Gastrocnemius medialis (tissue), 4 donors: ENCODE measurements at regions of chr14 and their contacts with region 1.

Region 1: DNA sequence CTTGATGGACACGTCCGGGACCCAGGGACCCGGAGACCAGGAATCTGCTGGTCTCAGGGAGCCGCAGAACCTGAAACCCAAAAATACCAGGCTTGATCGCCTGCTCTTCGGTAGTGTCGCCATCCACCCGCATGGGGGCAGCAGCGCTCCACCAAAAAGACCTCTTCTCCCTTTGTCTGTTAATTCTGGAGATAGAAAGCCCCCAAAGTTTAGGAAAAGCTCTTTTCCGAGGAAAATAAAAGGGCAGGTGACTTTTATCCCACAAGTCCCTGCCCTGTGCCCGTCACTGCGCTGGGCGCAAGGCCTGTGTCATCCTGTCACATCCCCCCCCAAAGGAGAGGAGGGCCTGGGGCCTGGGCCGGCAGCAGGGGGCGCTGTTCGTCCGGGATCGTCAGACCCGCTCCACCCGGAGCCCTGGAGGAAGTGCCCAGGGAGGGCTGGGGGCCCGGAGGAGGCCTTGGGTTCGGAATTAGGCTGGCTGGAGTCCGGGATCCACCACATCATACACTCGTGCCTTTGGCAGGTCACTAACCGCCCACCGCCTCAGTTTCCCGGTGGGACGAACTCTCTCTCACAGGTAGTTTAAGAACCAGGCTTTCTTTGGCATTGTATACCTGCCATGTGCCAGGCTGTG is 31.9 kb downstream of the DAD1 start:
- DNase-seq: peak; percentile 32 to 65
- ATAC-seq: peak; percentile 75 to 86
- H3K4me3 ChIP-seq: peak overlapping the region; percentile 31 to 62 (median 47)
- H3K27ac ChIP-seq: peak overlapping the region in 3 of 4 donors; percentile 56 to 60 (median 58)
- H3K4me1 ChIP-seq: peaks cover 9 to 17% of the 10 kb centered on the region in 2 donors
- H3K27me3 ChIP-seq: no peaks in the 10 kb centered on the region
- CTCF ChIP-seq: peak; percentile 97 to 100 (median 98)
- POLR2A ChIP-seq: no peak

Region 2: DNA sequence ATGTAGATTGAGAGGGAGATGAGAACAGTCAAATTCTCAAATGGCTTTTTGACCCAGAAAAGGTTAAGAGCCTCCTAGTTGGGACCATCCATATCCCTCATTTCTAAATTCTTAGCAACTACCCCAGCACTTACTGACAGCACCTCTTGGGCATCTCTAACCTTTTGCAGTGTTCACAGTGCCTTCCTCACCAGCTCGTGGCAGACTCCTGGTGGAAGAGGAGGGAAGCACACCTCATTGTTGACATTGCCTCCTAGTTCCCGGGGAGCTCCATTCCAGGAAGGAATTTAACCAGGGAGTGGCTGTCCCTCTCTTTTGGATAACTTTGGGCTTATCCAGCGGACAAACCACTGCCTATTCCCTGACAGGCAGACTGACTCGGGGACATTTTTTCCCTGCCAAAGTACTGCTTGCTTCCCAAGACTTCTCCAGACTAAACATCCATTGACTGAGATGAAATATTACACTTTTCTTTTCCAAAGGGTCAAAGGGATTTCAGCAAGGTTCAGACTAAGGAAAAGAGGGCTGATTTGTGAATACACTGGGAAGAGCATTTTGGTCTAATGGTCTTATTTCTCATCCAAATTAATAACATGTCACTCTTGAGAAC is 96.0 kb after region 1 on chr14:
- in situ Hi-C with region 1: loop called in 1 of 4 experiments (anchors 10 kb)
- intact Hi-C with region 1: loop called (anchors 2 kb)
- DNase-seq: peak in 1 of 2 donors; percentile 33
- ATAC-seq: peak; percentile 58 to 70
- H3K4me3 ChIP-seq: no peak overlapping the region
- H3K27ac ChIP-seq: no peak overlapping the region
- H3K4me1 ChIP-seq: peaks cover 0 to 4% of the 10 kb centered on the region in 2 donors
- H3K27me3 ChIP-seq: no peaks in the 10 kb centered on the region
- CTCF ChIP-seq: peak; percentile 50 to 68 (median 65)
- POLR2A ChIP-seq: no peak

Region 3: GRCh38 chr14:22822571-22823098 is 265.5 kb after region 1 on chr14:
- in situ Hi-C with region 1: no loop called
- intact Hi-C with region 1: loop called (anchors 2 kb)
- DNase-seq: peak; percentile 27 to 45
- ATAC-seq: peak; percentile 75 to 79
- H3K4me3 ChIP-seq: peak overlapping the region; percentile 43 to 49 (median 46)
- H3K27ac ChIP-seq: no peak overlapping the region
- H3K4me1 ChIP-seq: peaks cover 6 to 11% of the 10 kb centered on the region in 2 donors
- H3K27me3 ChIP-seq: peaks cover 0 to 2% (median 0%) of the 10 kb centered on the region in 3 donors
- CTCF ChIP-seq: peak; percentile 62 to 83 (median 79)
- POLR2A ChIP-seq: no peak

Region 4: GRCh38 chr14:22900081-22900799 is 343.1 kb after region 1 on chr14:
- in situ Hi-C with region 1: no loop called
- intact Hi-C with region 1: loop called (anchors 2 kb)
- DNase-seq: no peak
- ATAC-seq: peak; percentile 62 to 71
- H3K4me3 ChIP-seq: no peak overlapping the region
- H3K27ac ChIP-seq: peak overlapping the region in 1 of 4 donors; percentile 22
- H3K4me1 ChIP-seq: no peaks in the 10 kb centered on the region
- H3K27me3 ChIP-seq: no peaks in the 10 kb centered on the region
- CTCF ChIP-seq: peak in 4 of 5 experiments; percentile 21 to 56 (median 43)
- POLR2A ChIP-seq: no peak